GM12878 (cell line): ENCODE measurements at regions of chr3 and their contacts with region 1.

Region 1: DNA sequence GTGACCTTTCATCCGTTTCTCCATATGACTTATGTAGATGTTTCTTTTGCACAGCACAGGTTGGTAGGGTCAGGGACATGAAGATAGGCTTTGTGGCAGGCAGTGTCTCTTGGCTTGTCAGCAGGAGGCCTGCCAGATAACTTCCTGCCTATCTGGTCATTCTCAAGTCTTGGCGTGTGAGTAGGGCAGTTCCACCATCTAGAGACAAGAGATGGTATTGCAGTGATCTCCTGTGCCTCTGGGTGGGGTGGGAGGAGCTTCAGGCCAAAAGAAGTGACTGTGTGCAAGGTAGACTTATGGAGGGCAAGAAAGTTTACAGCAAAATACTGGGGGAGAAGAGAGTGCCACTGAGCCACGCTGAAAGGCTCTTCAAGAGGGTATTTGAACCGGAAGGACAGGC is 11.0 kb downstream of the TEX264 start:
- DNase-seq: peak; percentile 81
- ATAC-seq: peak; percentile 89
- H3K4me3 ChIP-seq: no peak overlapping the region
- H3K27ac ChIP-seq: peak overlapping the region; percentile 51
- H3K4me1 ChIP-seq: peaks cover 38% of the 10 kb centered on the region
- H3K27me3 ChIP-seq: no peaks in the 10 kb centered on the region
- CTCF ChIP-seq: peak; percentile 90 to 99 (median 93); a peak in 5 of 6 replicates
- EP300 ChIP-seq: no peak
- POLR2A ChIP-seq: no peak
- RAD21 ChIP-seq: peak; percentile 93

Region 2: DNA sequence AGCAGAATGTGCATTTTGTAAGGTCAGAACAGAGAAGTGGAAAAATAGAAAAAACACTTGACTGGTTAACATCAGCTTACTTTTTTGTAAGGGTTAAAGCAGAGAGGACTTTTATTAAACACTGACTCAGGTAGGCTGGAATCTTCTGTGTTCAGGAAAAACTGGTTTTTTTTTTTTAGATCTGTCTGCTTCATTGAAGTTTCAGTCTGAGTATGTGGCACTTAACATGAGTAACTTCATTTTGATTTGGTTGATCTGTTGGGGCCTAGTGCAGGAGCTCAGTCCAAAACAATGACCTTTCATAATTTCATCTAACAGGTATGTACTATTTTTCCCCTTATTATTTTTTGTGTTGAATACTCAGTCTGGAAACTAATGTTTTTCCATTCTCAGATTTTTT is 866.2 kb before region 1 on chr3:
- CTCF ChIA-PET with region 1: no interaction called
- POLR2A ChIA-PET with region 1: no interaction called
- RAD21 ChIA-PET with region 1: no interaction called
- SMC1A ChIA-PET with region 1: no interaction called
- in situ Hi-C with region 1: no loop called
- intact Hi-C with region 1: no loop called
- DNase-seq: no peak
- ATAC-seq: no peak
- H3K4me3 ChIP-seq: no peak overlapping the region
- H3K27ac ChIP-seq: no peak overlapping the region
- H3K4me1 ChIP-seq: no peaks in the 10 kb centered on the region
- H3K27me3 ChIP-seq: no peaks in the 10 kb centered on the region
- CTCF ChIP-seq: no peak
- EP300 ChIP-seq: no peak
- POLR2A ChIP-seq: no peak
- RAD21 ChIP-seq: no peak

Region 3: GRCh38 chr3:51384726-51385473 is 297.2 kb before region 1 on chr3 and contains the start of gene MANF:
- CTCF ChIA-PET with region 1: interaction called, 37 read pairs
- POLR2A ChIA-PET with region 1: no interaction called
- RAD21 ChIA-PET with region 1: interaction called, 6 read pairs
- SMC1A ChIA-PET with region 1: interaction called, 13 read pairs
- in situ Hi-C with region 1: loop called (anchors 5 kb)
- intact Hi-C with region 1: no loop called
- DNase-seq: peak; percentile 93
- ATAC-seq: peak; percentile 97
- H3K4me3 ChIP-seq: peak within 1 kb of the TSS; percentile 96
- H3K27ac ChIP-seq: peak within 1 kb of the TSS; percentile 86
- H3K4me1 ChIP-seq: peaks cover 16% of the 10 kb centered on the region
- H3K27me3 ChIP-seq: no peaks in the 10 kb centered on the region
- CTCF ChIP-seq: peak in 1 of 3 experiments; percentile 6; a peak in 1 of 6 replicates
- EP300 ChIP-seq: peak in 1 of 2 experiments; percentile 13; a peak in 1 of 4 replicates
- POLR2A ChIP-seq: peak; percentile 98
- RAD21 ChIP-seq: no peak
- polyA plus RNA-seq, gene MANF: 22.0 to 68.0 TPM

Region 4: DNA sequence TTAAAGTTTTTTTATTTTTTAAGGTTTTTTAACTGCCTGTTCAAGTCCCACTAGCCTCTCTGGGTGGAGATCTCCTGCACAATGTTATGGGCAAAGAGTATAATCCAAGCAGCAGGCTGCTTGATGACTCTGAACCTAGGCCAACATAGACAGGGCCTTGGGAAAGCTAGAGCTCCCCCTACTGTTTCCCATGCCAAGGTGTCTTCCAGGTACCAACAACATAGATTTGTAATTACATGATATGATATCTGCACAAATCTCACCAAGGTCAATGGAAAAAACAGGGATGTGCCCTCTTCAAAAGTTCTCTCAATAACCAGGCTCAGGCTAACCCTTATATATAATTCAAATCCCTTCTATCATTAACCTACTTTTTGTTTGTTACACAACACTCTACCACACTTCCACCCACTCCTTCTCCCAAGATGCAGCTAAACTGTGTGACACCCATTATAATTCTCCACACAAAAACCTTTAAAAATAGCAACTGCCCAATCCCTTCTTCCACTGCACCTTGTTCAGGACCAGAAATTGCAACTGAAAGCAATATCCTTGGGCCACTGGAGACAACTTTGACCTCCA is 247.2 kb before region 1 on chr3:
- CTCF ChIA-PET with region 1: interaction called, 10 read pairs
- POLR2A ChIA-PET with region 1: no interaction called
- RAD21 ChIA-PET with region 1: no interaction called
- SMC1A ChIA-PET with region 1: interaction called, 4 read pairs
- in situ Hi-C with region 1: no loop called
- intact Hi-C with region 1: no loop called
- DNase-seq: peak; percentile 5
- ATAC-seq: peak; percentile 94
- H3K4me3 ChIP-seq: no peak overlapping the region
- H3K27ac ChIP-seq: no peak overlapping the region
- H3K4me1 ChIP-seq: no peaks in the 10 kb centered on the region
- H3K27me3 ChIP-seq: no peaks in the 10 kb centered on the region
- CTCF ChIP-seq: peak; percentile 60 to 84 (median 68)
- EP300 ChIP-seq: no peak
- POLR2A ChIP-seq: no peak
- RAD21 ChIP-seq: peak; percentile 39

Region 5: GRCh38 chr3:51538459-51539290 is 143.4 kb before region 1 on chr3 and contains the start of gene RAD54L2:
- CTCF ChIA-PET with region 1: interaction called, 7 read pairs
- POLR2A ChIA-PET with region 1: interaction called, 8 read pairs
- RAD21 ChIA-PET with region 1: interaction called, 5 read pairs
- SMC1A ChIA-PET with region 1: interaction called, 12 read pairs
- in situ Hi-C with region 1: no loop called
- intact Hi-C with region 1: no loop called
- DNase-seq: peak; percentile 23
- ATAC-seq: peak; percentile 90
- H3K4me3 ChIP-seq: peak within 1 kb of the TSS; percentile 97
- H3K27ac ChIP-seq: peak within 1 kb of the TSS; percentile 62
- H3K4me1 ChIP-seq: no peaks in the 10 kb centered on the region; the same call in 1 of the 2 replicates
- H3K27me3 ChIP-seq: no peaks in the 10 kb centered on the region
- CTCF ChIP-seq: peak; percentile 20 to 43 (median 33); a peak in 4 of 6 replicates
- EP300 ChIP-seq: no peak
- POLR2A ChIP-seq: peak; percentile 87
- RAD21 ChIP-seq: no peak
- polyA plus RNA-seq, gene RAD54L2: 2.2 to 4.2 TPM

Region 6: GRCh38 chr3:51670823-51671733 is 11.0 kb before region 1 on chr3 and contains the start of gene TEX264:
- CTCF ChIA-PET with region 1: interaction called, 238 read pairs
- POLR2A ChIA-PET with region 1: interaction called, 36 read pairs
- RAD21 ChIA-PET with region 1: interaction called, 78 read pairs
- SMC1A ChIA-PET with region 1: interaction called, 87 read pairs
- in situ Hi-C with region 1: no loop called
- intact Hi-C with region 1: loop called (anchors 1 kb)
- DNase-seq: peak; percentile 53
- ATAC-seq: peak; percentile 87
- H3K4me3 ChIP-seq: peak within 1 kb of the TSS; percentile 68
- H3K27ac ChIP-seq: peak within 1 kb of the TSS; percentile 93
- H3K4me1 ChIP-seq: peaks cover 22% of the 10 kb centered on the region
- H3K27me3 ChIP-seq: no peaks in the 10 kb centered on the region
- CTCF ChIP-seq: no peak
- EP300 ChIP-seq: no peak
- POLR2A ChIP-seq: peak; percentile 88
- RAD21 ChIP-seq: no peak
- polyA plus RNA-seq, gene TEX264: 3.6 to 15.3 TPM